ENCODE measurements at regions of chr14 and their contacts with region 1.

Region 1: GRCh38 chr14:56168007-56168616 is 49.9 kb downstream of the PELI2 start:
- DNase-seq: no peak

Region 2: DNA sequence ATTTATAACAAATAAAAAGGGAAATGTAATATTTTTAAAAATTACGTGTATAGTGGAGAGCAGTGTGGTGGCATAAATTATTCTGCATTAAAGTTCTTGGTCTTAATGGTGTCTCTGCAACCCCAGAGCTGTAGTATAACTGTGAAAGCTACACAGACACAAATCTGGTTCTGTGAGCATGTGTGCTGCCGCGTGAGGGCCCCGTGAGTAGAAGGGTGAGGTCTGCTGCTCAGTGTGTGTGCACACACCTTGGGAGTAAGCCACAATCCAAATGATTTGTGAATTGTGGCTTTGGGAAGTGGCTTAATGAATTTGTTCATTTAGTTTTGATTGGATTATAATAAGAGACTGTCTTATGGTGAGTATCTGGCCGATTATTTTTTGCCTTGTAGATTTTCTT is 33.1 kb before region 1 on chr14:
- intact Hi-C with region 1: loop called in 1 of 2 experiments (anchors 1 kb)
- DNase-seq: no peak

Measured in posterior vena cava (tissue), 2 donors.